Activated CD4-positive, alpha-beta T cell treated with anti-CD3 and anti-CD28 coated beads, Interleukin-2, amount 10 ng/mL, durations not matched to agents 24 days and 14 days (primary cell): ENCODE measurements at regions of chr1 and their contacts with region 1.

Region 1: GRCh38 chr1:59947047-59947938 is 20.7 kb upstream of the CYP2J2 start:
- DNase-seq: peak; percentile 83
- H3K4me3 Mint-ChIP-seq: no peak overlapping the region
- H3K27ac Mint-ChIP-seq: no peak overlapping the region
- H3K4me1 Mint-ChIP-seq: no peaks in the 10 kb centered on the region
- H3K27me3 Mint-ChIP-seq: peaks cover 8% of the 10 kb centered on the region

Region 2: GRCh38 chr1:59879574-59879973 is 67.7 kb before region 1 on chr1:
- intact Hi-C with region 1: loop called (anchors 1 kb)
- DNase-seq: peak; percentile 82
- H3K4me3 Mint-ChIP-seq: no peak overlapping the region
- H3K27ac Mint-ChIP-seq: no peak overlapping the region
- H3K4me1 Mint-ChIP-seq: no peaks in the 10 kb centered on the region
- H3K27me3 Mint-ChIP-seq: peaks cover 2% of the 10 kb centered on the region

Region 3: GRCh38 chr1:59903141-59903754 is 44.0 kb before region 1 on chr1:
- intact Hi-C with region 1: loop called (anchors 1 kb)
- DNase-seq: peak; percentile 72
- H3K4me3 Mint-ChIP-seq: peak overlapping the region; percentile 13
- H3K27ac Mint-ChIP-seq: no peak overlapping the region
- H3K4me1 Mint-ChIP-seq: peaks cover 3% of the 10 kb centered on the region
- H3K27me3 Mint-ChIP-seq: no peaks in the 10 kb centered on the region